ENCODE measurements at regions of chr14 and their contacts with region 1.

Region 1: DNA sequence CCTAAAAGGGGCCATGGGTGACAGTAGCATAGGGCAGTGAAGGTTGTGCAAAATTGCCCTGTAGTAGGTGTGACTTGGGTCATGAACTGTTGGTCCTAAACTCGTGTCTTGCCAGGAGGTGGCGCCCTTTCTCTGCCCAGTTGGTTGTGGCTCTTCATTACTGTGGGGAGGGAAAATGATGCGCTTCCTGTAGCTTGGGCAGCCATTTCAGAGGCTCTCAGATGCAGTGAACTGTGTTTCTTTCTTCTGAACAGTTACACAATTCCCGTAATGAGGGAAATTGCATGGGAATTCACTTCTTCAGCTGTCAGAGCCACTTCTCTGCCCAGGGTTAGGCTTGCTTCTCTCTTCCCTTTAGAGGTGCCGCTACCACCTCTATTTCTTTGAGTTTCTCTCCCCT is 148.1 kb upstream of the NRXN3 start:
- DNase-seq: peak; percentile 67
- ATAC-seq: peak; percentile 99
- H3K4me3 ChIP-seq: no peak overlapping the region
- H3K27ac ChIP-seq: no peak overlapping the region
- H3K4me1 ChIP-seq: no peaks in the 10 kb centered on the region
- H3K27me3 ChIP-seq: peaks cover 10% of the 10 kb centered on the region; the same call in 1 of the 2 replicates
- CTCF ChIP-seq: peak; percentile 42 to 86 (median 80); a peak in 5 of 6 replicates
- POLR2A ChIP-seq: no peak
- RAD21 ChIP-seq: peak; percentile 84

Region 2: DNA sequence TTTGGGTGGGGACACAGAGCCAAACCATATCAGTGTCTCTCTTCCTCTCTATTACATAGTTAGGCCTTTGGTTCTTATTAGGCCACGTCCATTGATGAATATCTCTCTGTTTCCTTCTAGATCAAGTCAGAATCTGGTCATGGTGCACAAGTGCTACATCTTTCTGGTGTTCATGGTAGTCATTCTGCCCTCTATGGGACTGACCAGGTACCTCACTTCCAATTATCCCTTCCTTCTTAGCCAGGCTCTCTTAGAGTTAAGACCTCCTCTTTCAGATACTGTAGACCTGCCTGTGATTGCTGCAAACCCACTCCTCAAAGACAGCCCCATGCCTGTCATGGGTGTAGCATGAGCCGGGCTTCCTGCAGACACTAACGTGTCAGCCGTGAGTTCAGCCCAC is 776.2 kb before region 1 on chr14:
- CTCF ChIA-PET with region 1: no interaction called
- POLR2A ChIA-PET with region 1: no interaction called
- RAD21 ChIA-PET with region 1: no interaction called
- intact Hi-C with region 1: no loop called
- DNase-seq: no peak
- ATAC-seq: peak; percentile 63
- H3K4me3 ChIP-seq: no peak overlapping the region
- H3K27ac ChIP-seq: no peak overlapping the region
- H3K4me1 ChIP-seq: no peaks in the 10 kb centered on the region
- H3K27me3 ChIP-seq: no peaks in the 10 kb centered on the region
- CTCF ChIP-seq: peak in 2 of 3 experiments; percentile 33 to 40; a peak in 4 of 6 replicates
- POLR2A ChIP-seq: no peak
- RAD21 ChIP-seq: peak; percentile 19; the same call in 1 of the 2 replicates

Region 3: GRCh38 chr14:77980475-77981321 is 41.4 kb before region 1 on chr14:
- CTCF ChIA-PET with region 1: no interaction called
- POLR2A ChIA-PET with region 1: no interaction called
- RAD21 ChIA-PET with region 1: no interaction called
- intact Hi-C with region 1: no loop called
- DNase-seq: no peak
- ATAC-seq: no peak
- H3K4me3 ChIP-seq: no peak overlapping the region
- H3K27ac ChIP-seq: no peak overlapping the region
- H3K4me1 ChIP-seq: no peaks in the 10 kb centered on the region
- H3K27me3 ChIP-seq: no peaks in the 10 kb centered on the region; the same call in 1 of the 2 replicates
- CTCF ChIP-seq: no peak
- POLR2A ChIP-seq: no peak
- RAD21 ChIP-seq: no peak

Region 4: GRCh38 chr14:78164238-78164853 is 142.3 kb after region 1 on chr14:
- CTCF ChIA-PET with region 1: no interaction called
- POLR2A ChIA-PET with region 1: no interaction called
- RAD21 ChIA-PET with region 1: no interaction called
- intact Hi-C with region 1: loop called (anchors 5 kb)
- DNase-seq: peak; percentile 12
- ATAC-seq: peak; percentile 95
- H3K4me3 ChIP-seq: no peak overlapping the region
- H3K27ac ChIP-seq: no peak overlapping the region
- H3K4me1 ChIP-seq: no peaks in the 10 kb centered on the region
- H3K27me3 ChIP-seq: peaks cover 45% of the 10 kb centered on the region
- CTCF ChIP-seq: peak; percentile 18 to 79 (median 73); a peak in 4 of 6 replicates
- POLR2A ChIP-seq: no peak
- RAD21 ChIP-seq: peak; percentile 27; the same call in 1 of the 2 replicates

Region 5: GRCh38 chr14:78319887-78320635 is 298.0 kb after region 1 on chr14:
- CTCF ChIA-PET with region 1: no interaction called
- POLR2A ChIA-PET with region 1: no interaction called
- RAD21 ChIA-PET with region 1: no interaction called
- intact Hi-C with region 1: no loop called
- DNase-seq: no peak
- ATAC-seq: no peak
- H3K4me3 ChIP-seq: no peak overlapping the region
- H3K27ac ChIP-seq: no peak overlapping the region
- H3K4me1 ChIP-seq: no peaks in the 10 kb centered on the region
- H3K27me3 ChIP-seq: peaks cover 39% of the 10 kb centered on the region
- CTCF ChIP-seq: no peak
- POLR2A ChIP-seq: no peak
- RAD21 ChIP-seq: no peak

Region 6: DNA sequence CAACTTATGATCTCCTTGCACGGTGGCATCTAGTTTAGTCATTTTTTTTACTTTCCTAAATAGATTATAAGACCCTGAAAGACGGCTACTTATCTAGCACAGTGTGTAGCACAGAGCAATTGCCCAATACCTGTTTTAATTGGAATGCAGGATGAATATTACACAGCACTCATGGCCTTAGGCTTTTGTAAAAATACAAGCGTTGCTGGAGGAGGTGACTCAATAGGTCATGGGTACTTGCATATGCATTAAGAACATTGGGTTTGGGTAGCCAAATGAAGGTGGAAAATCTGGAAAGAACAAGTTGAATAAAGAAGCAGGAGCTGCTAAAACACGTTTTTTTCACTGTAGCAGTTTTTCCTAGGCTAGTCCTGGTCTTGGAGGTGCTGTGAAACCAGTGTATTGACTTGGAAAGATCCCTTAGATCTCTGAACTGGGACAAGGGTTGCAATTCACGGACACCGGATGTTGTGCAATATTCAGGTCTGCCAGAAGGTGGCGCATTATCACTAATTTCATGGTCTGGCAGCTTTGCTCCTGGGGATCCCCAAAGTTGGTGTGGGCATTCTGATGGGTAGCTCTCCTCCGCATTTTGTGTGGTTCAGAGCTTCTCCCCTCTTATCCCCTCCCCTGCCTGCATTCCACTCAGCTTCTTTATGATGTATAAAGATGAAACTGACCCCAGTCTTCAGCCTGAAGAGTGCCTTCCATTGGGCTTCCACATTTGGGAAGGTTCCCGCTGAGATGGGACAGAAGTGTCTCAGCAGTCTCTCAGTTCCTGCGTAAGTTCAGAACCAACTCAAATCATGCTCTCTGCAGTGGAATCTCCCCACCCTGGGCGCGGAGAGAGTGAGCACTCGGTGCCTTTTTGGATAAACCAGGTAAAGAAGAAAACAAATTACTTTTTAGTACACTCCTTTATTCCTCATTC is 426.4 kb after region 1 on chr14:
- CTCF ChIA-PET with region 1: no interaction called
- POLR2A ChIA-PET with region 1: no interaction called
- RAD21 ChIA-PET with region 1: no interaction called
- intact Hi-C with region 1: loop called (anchors 1 kb)
- DNase-seq: peak; percentile 15
- ATAC-seq: peak; percentile 70
- H3K4me3 ChIP-seq: no peak overlapping the region
- H3K27ac ChIP-seq: no peak overlapping the region
- H3K4me1 ChIP-seq: no peaks in the 10 kb centered on the region
- H3K27me3 ChIP-seq: no peaks in the 10 kb centered on the region; the same call in 1 of the 2 replicates
- CTCF ChIP-seq: peak; percentile 37 to 78 (median 69); a peak in 5 of 6 replicates
- POLR2A ChIP-seq: no peak
- RAD21 ChIP-seq: peak; percentile 55

Region 7: DNA sequence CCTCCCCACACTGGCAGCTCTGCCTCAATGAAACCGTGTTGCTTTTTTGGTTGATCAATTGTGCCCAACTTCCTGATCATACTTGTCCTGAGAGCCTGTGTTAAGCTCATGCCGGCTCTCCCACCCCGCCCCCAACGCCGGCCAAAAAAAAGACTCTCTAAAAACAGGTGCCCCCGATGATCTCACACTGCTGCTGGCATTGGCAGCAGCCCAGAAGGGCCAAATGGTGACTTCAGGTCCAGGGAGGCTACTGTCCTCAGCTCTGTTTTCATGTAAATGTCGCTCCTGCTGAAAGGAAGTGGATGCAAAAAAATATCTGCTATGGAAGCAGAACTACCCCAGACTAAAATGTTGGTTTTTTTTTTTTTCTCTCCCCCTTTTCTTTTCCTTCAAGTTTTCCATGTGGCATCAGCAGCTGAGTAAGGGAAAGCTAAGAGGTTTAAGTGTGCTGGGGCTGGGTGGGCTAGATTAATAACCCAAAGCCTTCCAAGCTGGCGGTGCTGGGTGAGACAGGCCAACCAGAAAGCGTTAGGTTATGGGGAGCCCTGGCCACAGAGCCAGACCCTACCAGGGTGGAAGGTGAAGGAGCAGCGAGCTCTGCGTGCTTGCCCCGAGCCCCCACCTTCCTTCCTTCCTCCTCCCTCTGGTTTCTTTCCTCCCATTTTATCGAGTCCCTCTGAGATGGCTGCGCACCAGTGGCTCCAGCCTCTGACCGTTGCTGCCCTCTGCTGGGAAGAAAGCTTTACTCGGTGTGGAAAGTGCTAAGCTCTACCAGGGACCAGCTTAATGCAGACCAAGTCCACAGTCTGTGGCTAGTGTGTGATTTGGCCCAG is 544.2 kb after region 1 on chr14:
- CTCF ChIA-PET with region 1: interaction called, 11 read pairs
- POLR2A ChIA-PET with region 1: no interaction called
- RAD21 ChIA-PET with region 1: no interaction called
- intact Hi-C with region 1: loop called (anchors 1 kb)
- DNase-seq: peak; percentile 8
- ATAC-seq: peak; percentile 93
- H3K4me3 ChIP-seq: no peak overlapping the region
- H3K27ac ChIP-seq: no peak overlapping the region
- H3K4me1 ChIP-seq: no peaks in the 10 kb centered on the region
- H3K27me3 ChIP-seq: no peaks in the 10 kb centered on the region
- CTCF ChIP-seq: peak; percentile 25 to 68 (median 63); a peak in 4 of 6 replicates
- POLR2A ChIP-seq: no peak
- RAD21 ChIP-seq: peak; percentile 61

Region 8: DNA sequence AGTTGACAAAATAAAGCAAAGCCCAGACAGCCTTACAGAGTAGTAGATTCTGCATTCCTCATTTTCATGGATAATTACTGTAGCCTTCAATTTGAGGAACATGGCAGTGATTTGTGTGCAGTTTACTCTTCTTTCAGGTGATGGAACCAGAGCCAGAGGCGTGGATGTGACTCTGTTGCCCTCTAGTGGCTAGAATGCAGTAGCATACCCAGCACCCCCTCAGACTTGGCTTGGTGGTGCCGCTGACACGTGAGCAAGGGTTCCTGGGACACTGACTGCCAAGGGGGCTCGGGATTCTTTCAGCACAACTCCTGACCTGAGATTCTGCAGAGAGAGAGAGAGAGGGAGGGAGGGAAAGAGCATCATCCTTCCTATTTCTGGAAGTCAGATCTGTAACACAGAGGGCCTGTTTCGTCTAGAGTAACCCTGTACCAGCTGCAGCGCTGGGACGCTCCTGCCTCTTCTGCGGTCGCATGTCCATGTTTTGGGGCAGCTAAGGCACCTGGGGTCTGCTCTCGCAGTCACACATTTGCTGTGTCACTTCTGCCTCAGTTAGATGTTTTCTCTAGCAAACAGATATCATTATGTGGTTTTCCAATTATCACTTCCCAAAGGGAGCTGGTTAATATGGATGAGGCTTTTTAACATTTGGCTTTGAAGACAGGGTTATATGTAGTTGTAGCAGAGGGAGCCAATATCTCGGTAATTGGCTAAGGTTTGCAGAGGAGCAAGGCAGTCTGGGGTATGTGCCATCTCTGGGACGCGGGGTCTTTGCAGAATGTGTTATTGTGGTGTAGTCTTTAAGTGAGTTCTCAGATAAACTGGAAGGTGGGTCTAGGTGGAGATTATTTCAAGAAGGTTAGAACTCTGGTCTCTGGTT is 576.2 kb after region 1 on chr14:
- CTCF ChIA-PET with region 1: interaction called, 3 read pairs
- POLR2A ChIA-PET with region 1: no interaction called
- RAD21 ChIA-PET with region 1: no interaction called
- intact Hi-C with region 1: loop called (anchors 1 kb)
- DNase-seq: peak; percentile 29
- ATAC-seq: peak; percentile 94
- H3K4me3 ChIP-seq: no peak overlapping the region
- H3K27ac ChIP-seq: no peak overlapping the region
- H3K4me1 ChIP-seq: no peaks in the 10 kb centered on the region
- H3K27me3 ChIP-seq: no peaks in the 10 kb centered on the region; the same call in 1 of the 2 replicates
- CTCF ChIP-seq: peak; percentile 46 to 91 (median 90); a peak in 5 of 6 replicates
- POLR2A ChIP-seq: no peak
- RAD21 ChIP-seq: peak; percentile 68

Region 9: GRCh38 chr14:78697341-78697740 is 675.3 kb after region 1 on chr14:
- CTCF ChIA-PET with region 1: no interaction called
- POLR2A ChIA-PET with region 1: no interaction called
- RAD21 ChIA-PET with region 1: no interaction called
- intact Hi-C with region 1: loop called (anchors 2 kb)
- DNase-seq: peak; percentile 3
- ATAC-seq: no peak
- H3K4me3 ChIP-seq: no peak overlapping the region
- H3K27ac ChIP-seq: no peak overlapping the region
- H3K4me1 ChIP-seq: no peaks in the 10 kb centered on the region
- H3K27me3 ChIP-seq: no peaks in the 10 kb centered on the region
- CTCF ChIP-seq: peak in 2 of 3 experiments; percentile 38 to 45; a peak in 4 of 6 replicates
- POLR2A ChIP-seq: no peak
- RAD21 ChIP-seq: peak; percentile 44

Region 10: GRCh38 chr14:78848234-78848820 is 826.3 kb after region 1 on chr14:
- CTCF ChIA-PET with region 1: no interaction called
- POLR2A ChIA-PET with region 1: no interaction called
- RAD21 ChIA-PET with region 1: no interaction called
- intact Hi-C with region 1: loop called (anchors 5 kb)
- DNase-seq: peak; percentile 18
- ATAC-seq: peak; percentile 72; the same call in 1 of the 2 replicates
- H3K4me3 ChIP-seq: no peak overlapping the region
- H3K27ac ChIP-seq: no peak overlapping the region
- H3K4me1 ChIP-seq: no peaks in the 10 kb centered on the region
- H3K27me3 ChIP-seq: no peaks in the 10 kb centered on the region
- CTCF ChIP-seq: peak; percentile 14 to 88 (median 85); a peak in 4 of 6 replicates
- POLR2A ChIP-seq: no peak
- RAD21 ChIP-seq: peak; percentile 34

Measured in HCT116 (cell line).